ENCODE measurements at regions of chrX and their contacts with region 1.

Region 1: GRCh38 chrX:118872102-118872566 is 48.5 kb downstream of the ZCCHC12 start:
- DNase-seq: no peak
- ATAC-seq: no peak
- H3K4me3 ChIP-seq: no peak overlapping the region
- H3K27ac ChIP-seq: no peak overlapping the region
- H3K4me1 ChIP-seq: no peaks in the 10 kb centered on the region
- H3K27me3 ChIP-seq: no peaks in the 10 kb centered on the region
- CTCF ChIP-seq: no peak
- POLR2A ChIP-seq: no peak
- RAD21 ChIP-seq: no peak

Region 2: GRCh38 chrX:118770133-118770760 is 101.9 kb before region 1 on chrX:
- CTCF ChIA-PET with region 1: no interaction called
- POLR2A ChIA-PET with region 1: no interaction called
- dilution Hi-C with region 1: no loop called
- in situ Hi-C with region 1: no loop called
- intact Hi-C with region 1: no loop called
- DNase-seq: no peak
- ATAC-seq: no peak
- H3K4me3 ChIP-seq: no peak overlapping the region
- H3K27ac ChIP-seq: no peak overlapping the region
- H3K4me1 ChIP-seq: no peaks in the 10 kb centered on the region
- H3K27me3 ChIP-seq: no peaks in the 10 kb centered on the region
- CTCF ChIP-seq: no peak
- POLR2A ChIP-seq: no peak
- RAD21 ChIP-seq: no peak

Region 3: GRCh38 chrX:118862091-118862490 is 10.0 kb before region 1 on chrX:
- CTCF ChIA-PET with region 1: no interaction called
- POLR2A ChIA-PET with region 1: interaction called, 11 read pairs
- dilution Hi-C with region 1: no loop called
- in situ Hi-C with region 1: no loop called
- intact Hi-C with region 1: no loop called
- DNase-seq: no peak
- ATAC-seq: no peak
- H3K4me3 ChIP-seq: no peak overlapping the region
- H3K27ac ChIP-seq: no peak overlapping the region
- H3K4me1 ChIP-seq: no peaks in the 10 kb centered on the region
- H3K27me3 ChIP-seq: peaks cover 2% of the 10 kb centered on the region
- CTCF ChIP-seq: no peak
- POLR2A ChIP-seq: no peak
- RAD21 ChIP-seq: no peak